Activated CD4-positive, alpha-beta T cell treated with anti-CD3 and anti-CD28 coated beads, Interleukin-2, amount 10 ng/mL, durations not matched to agents 24 days and 14 days (primary cell): ENCODE measurements at regions of chr2 and their contacts with region 1.

Region 1: GRCh38 chr2:197145471-197146138 is 165.0 kb downstream of the ANKRD44 start:
- DNase-seq: peak; percentile 73
- H3K4me3 Mint-ChIP-seq: peak overlapping the region; percentile 55
- H3K27ac Mint-ChIP-seq: peak overlapping the region; percentile 93
- H3K4me1 Mint-ChIP-seq: peaks cover 52% of the 10 kb centered on the region
- H3K27me3 Mint-ChIP-seq: no peaks in the 10 kb centered on the region

Region 2: GRCh38 chr2:197113275-197113711 is 32.3 kb before region 1 on chr2:
- intact Hi-C with region 1: loop called (anchors 5 kb)
- DNase-seq: no peak
- H3K4me3 Mint-ChIP-seq: no peak overlapping the region
- H3K27ac Mint-ChIP-seq: no peak overlapping the region
- H3K4me1 Mint-ChIP-seq: peaks cover 18% of the 10 kb centered on the region
- H3K27me3 Mint-ChIP-seq: no peaks in the 10 kb centered on the region

Region 3: DNA sequence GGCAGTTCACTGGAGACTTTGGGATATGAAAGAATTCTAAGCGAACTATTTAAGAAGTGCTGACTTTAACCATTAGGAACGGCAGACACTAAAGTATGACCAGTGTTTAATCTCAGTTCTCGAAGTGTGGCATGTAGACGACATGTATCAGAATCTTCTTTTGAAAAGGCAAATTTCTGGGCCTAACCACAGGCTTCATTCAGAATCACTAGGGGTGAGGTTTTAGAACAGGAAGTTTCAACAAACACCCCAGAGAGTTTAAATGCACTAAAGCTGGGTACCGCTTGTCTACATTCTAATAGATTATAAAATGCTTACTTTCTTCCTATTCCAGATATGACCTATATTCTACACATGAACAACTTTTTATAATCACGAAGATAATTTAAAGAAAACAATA is 15.3 kb before region 1 on chr2:
- intact Hi-C with region 1: loop called (anchors 2 kb)
- DNase-seq: peak; percentile 77
- H3K4me3 Mint-ChIP-seq: peak overlapping the region; percentile 19
- H3K27ac Mint-ChIP-seq: peak overlapping the region; percentile 83
- H3K4me1 Mint-ChIP-seq: peaks cover 63% of the 10 kb centered on the region
- H3K27me3 Mint-ChIP-seq: no peaks in the 10 kb centered on the region

Region 4: GRCh38 chr2:197159661-197160211 is 14.1 kb after region 1 on chr2:
- intact Hi-C with region 1: loop called (anchors 2 kb)
- DNase-seq: peak; percentile 68
- H3K4me3 Mint-ChIP-seq: no peak overlapping the region
- H3K27ac Mint-ChIP-seq: peak overlapping the region; percentile 64
- H3K4me1 Mint-ChIP-seq: peaks cover 46% of the 10 kb centered on the region
- H3K27me3 Mint-ChIP-seq: no peaks in the 10 kb centered on the region

Region 5: DNA sequence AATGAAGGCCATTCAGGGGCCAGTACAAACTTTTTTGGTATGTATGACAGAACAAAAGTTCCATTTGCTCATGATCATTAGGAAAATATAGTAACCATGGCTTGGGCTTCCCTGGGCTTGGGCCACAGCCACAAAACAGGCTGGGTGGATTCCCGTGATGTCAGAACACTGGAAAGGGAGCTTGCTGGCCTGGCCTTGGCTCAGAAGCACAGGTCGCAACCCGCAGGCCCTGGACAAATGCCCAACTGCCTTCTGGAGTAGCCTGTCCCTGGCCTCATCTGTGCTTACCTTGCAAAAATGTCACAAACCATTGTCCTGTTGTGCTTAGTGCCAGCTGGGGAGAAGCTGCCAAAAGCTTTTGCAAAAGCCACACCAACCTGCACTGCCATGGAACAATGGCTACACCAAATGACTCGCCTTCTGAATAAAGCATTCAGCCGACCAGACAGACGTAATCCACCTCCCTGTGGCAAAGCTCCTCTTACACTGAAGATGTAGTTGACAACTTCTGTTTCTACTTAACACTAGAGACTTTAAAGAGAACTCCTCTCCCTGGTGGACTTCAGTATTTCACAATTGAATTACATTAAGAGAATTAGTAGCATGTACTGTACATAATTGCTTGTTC is 39.5 kb after region 1 on chr2:
- intact Hi-C with region 1: loop called (anchors 5 kb)
- DNase-seq: no peak
- H3K4me3 Mint-ChIP-seq: no peak overlapping the region
- H3K27ac Mint-ChIP-seq: peak overlapping the region; percentile 52
- H3K4me1 Mint-ChIP-seq: peaks cover 56% of the 10 kb centered on the region
- H3K27me3 Mint-ChIP-seq: no peaks in the 10 kb centered on the region

Region 6: GRCh38 chr2:197399887-197400540 is 254.4 kb after region 1 on chr2:
- intact Hi-C with region 1: no loop called
- DNase-seq: no peak
- H3K4me3 Mint-ChIP-seq: no peak overlapping the region
- H3K27ac Mint-ChIP-seq: no peak overlapping the region
- H3K4me1 Mint-ChIP-seq: no peaks in the 10 kb centered on the region
- H3K27me3 Mint-ChIP-seq: no peaks in the 10 kb centered on the region